GM12878 (cell line): ENCODE measurements at regions of chr19 and their contacts with region 1.

Region 1: DNA sequence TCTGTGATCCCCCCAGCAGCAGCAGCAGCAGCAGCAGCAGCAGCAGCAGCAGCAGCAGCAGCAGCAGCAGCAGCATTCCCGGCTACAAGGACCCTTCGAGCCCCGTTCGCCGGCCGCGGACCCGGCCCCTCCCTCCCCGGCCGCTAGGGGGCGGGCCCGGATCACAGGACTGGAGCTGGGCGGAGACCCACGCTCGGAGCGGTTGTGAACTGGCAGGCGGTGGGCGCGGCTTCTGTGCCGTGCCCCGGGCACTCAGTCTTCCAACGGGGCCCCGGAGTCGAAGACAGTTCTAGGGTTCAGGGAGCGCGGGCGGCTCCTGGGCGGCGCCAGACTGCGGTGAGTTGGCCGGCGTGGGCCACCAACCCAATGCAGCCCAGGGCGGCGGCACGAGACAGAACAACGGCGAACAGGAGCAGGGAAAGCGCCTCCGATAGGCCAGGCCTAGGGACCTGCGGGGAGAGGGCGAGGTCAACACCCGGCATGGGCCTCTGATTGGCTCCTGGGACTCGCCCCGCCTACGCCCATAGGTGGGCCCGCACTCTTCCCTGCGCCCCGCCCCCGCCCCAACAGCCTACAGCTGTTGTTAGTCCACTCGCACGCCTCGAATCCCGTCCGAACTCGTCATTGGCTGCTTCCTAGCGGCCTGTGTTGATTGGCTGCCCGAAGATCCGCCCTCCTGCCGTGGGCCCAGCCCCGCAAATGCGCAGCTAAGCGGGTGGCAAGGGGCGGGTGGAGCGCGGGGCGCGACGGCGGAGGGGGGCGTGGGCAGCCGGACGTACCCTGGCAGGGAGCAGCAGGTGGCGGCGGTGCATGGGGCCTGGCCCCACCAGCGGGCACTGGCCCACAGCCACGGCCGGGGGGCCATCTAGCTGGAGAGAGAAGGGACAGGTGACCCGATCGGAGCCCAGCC is 1.4 kb upstream of the SIX5 start:
- DNase-seq: peak; percentile 76
- ATAC-seq: peak; percentile 82
- H3K4me3 ChIP-seq: peak overlapping the region; percentile 78
- H3K27ac ChIP-seq: peak overlapping the region; percentile 67; the same call in 1 of the 2 replicates
- H3K4me1 ChIP-seq: peaks cover 4% of the 10 kb centered on the region
- H3K27me3 ChIP-seq: no peaks in the 10 kb centered on the region
- CTCF ChIP-seq: peak; percentile 86 to 95 (median 94)
- EP300 ChIP-seq: no peak
- POLR2A ChIP-seq: peak; percentile 65; the same call in 1 of the 2 replicates
- RAD21 ChIP-seq: peak; percentile 74

Region 2: GRCh38 chr19:45523642-45524256 is 246.7 kb before region 1 on chr19:
- CTCF ChIA-PET with region 1: no interaction called
- POLR2A ChIA-PET with region 1: no interaction called
- RAD21 ChIA-PET with region 1: no interaction called
- SMC1A ChIA-PET with region 1: no interaction called
- in situ Hi-C with region 1: no loop called
- intact Hi-C with region 1: no loop called
- DNase-seq: peak; percentile 57
- ATAC-seq: peak; percentile 96
- H3K4me3 ChIP-seq: no peak overlapping the region
- H3K27ac ChIP-seq: no peak overlapping the region
- H3K4me1 ChIP-seq: peaks cover 10% of the 10 kb centered on the region; the same call in 1 of the 2 replicates
- H3K27me3 ChIP-seq: no peaks in the 10 kb centered on the region
- CTCF ChIP-seq: peak; percentile 82 to 98 (median 90)
- EP300 ChIP-seq: no peak
- POLR2A ChIP-seq: no peak
- RAD21 ChIP-seq: peak; percentile 67

Region 3: DNA sequence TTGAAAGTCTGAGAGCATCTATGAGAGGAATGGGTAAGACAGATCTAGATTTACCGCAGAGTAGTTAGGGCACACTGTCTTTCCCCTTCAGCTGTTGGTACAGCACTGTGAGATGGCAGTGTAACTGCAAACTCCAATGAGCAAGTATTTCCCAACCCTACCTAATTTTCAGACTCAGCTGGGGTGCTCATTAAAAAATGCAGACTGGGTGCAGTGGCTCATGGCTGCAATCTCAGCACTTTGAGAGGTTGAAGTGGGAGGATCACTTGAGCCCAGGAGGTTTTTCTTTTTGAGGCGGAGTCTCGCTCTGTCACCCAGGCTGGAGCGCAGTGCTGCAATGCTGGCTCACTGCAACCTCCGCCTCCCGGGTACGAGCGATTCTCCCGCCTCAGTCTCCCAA is 65.3 kb before region 1 on chr19:
- CTCF ChIA-PET with region 1: interaction called, 8 read pairs
- POLR2A ChIA-PET with region 1: interaction called, 11 read pairs
- RAD21 ChIA-PET with region 1: interaction called, 16 read pairs
- SMC1A ChIA-PET with region 1: interaction called, 6 read pairs
- in situ Hi-C with region 1: no loop called
- intact Hi-C with region 1: no loop called
- DNase-seq: no peak
- ATAC-seq: no peak
- H3K4me3 ChIP-seq: no peak overlapping the region
- H3K27ac ChIP-seq: 0 out of 2 replicates have a peak overlapping the region, but pooled peaks have one; percentile 26
- H3K4me1 ChIP-seq: peaks cover 19% of the 10 kb centered on the region
- H3K27me3 ChIP-seq: no peaks in the 10 kb centered on the region
- CTCF ChIP-seq: no peak
- EP300 ChIP-seq: no peak
- POLR2A ChIP-seq: no peak
- RAD21 ChIP-seq: no peak

Region 4: GRCh38 chr19:45730389-45731288 is 39.8 kb before region 1 on chr19 and contains the start of gene FBXO46:
- CTCF ChIA-PET with region 1: interaction called, 8 read pairs
- POLR2A ChIA-PET with region 1: interaction called, 24 read pairs
- RAD21 ChIA-PET with region 1: interaction called, 27 read pairs
- SMC1A ChIA-PET with region 1: interaction called, 13 read pairs
- in situ Hi-C with region 1: no loop called
- intact Hi-C with region 1: loop called (anchors 5 kb)
- DNase-seq: peak; percentile 96
- ATAC-seq: peak; percentile 98
- H3K4me3 ChIP-seq: peak within 1 kb of the TSS; percentile 97
- H3K27ac ChIP-seq: peak within 1 kb of the TSS; percentile 90
- H3K4me1 ChIP-seq: peaks cover 4% of the 10 kb centered on the region; the same call in 1 of the 2 replicates
- H3K27me3 ChIP-seq: no peaks in the 10 kb centered on the region
- CTCF ChIP-seq: peak; percentile 28 to 40 (median 35); a peak in 5 of 6 replicates
- EP300 ChIP-seq: no peak
- POLR2A ChIP-seq: peak; percentile 87
- RAD21 ChIP-seq: peak; percentile 31; the same call in 1 of the 2 replicates
- polyA plus RNA-seq, gene FBXO46: 2.5 to 7.1 TPM

Region 5: GRCh38 chr19:45792470-45793177 is 22.2 kb after region 1 on chr19 and contains the start of gene DMWD:
- CTCF ChIA-PET with region 1: interaction called, 110 read pairs
- POLR2A ChIA-PET with region 1: interaction called, 20 read pairs
- RAD21 ChIA-PET with region 1: interaction called, 18 read pairs
- SMC1A ChIA-PET with region 1: interaction called, 7 read pairs
- in situ Hi-C with region 1: no loop called
- intact Hi-C with region 1: loop called (anchors 2 kb)
- DNase-seq: peak; percentile 81
- ATAC-seq: peak; percentile 95
- H3K4me3 ChIP-seq: peak within 1 kb of the TSS; percentile 98
- H3K27ac ChIP-seq: peak within 1 kb of the TSS; percentile 72
- H3K4me1 ChIP-seq: peaks cover 14% of the 10 kb centered on the region
- H3K27me3 ChIP-seq: no peaks in the 10 kb centered on the region
- CTCF ChIP-seq: no peak
- EP300 ChIP-seq: no peak
- POLR2A ChIP-seq: peak; percentile 80
- RAD21 ChIP-seq: no peak
- polyA plus RNA-seq, gene DMWD: 3.5 to 3.8 TPM

Region 6: DNA sequence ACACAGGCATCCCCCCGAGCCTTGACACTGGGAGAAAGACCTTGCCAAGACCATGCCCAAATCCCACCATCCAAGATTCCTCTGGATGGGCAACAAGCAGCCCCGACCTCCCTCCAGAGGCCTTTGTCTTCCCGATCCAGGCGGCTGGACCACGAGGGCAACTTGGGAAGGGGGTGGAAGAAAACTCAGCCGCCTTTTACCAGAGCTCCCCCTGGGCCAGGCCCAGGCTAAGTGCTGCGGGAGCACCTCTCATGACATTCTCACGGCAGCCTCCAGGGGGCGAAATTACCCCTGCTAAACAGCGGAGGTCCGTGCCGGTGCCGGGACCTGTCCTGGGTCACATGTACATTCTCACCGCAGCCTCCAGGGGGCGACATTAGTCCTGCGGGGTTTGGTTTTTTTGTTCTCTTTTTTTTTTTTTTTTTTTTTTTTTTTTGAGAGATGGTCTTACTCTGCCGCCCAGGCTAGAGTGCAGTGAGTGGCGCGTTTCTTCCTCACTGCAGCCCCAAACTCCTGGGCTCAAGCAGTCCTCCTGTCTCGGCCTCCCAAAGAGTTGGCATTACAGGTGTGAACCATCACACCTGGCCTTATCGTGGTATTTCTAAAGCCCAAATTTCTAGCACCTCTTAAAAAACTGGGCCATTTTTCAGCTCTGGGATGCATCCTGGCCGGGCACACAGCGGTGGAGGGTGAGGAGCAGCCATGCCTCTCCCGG is 46.7 kb after region 1 on chr19:
- CTCF ChIA-PET with region 1: interaction called, 13 read pairs
- POLR2A ChIA-PET with region 1: interaction called, 3 read pairs
- RAD21 ChIA-PET with region 1: interaction called, 7 read pairs
- SMC1A ChIA-PET with region 1: no interaction called
- in situ Hi-C with region 1: no loop called
- intact Hi-C with region 1: no loop called
- DNase-seq: peak; percentile 75
- ATAC-seq: peak; percentile 99
- H3K4me3 ChIP-seq: no peak overlapping the region
- H3K27ac ChIP-seq: no peak overlapping the region
- H3K4me1 ChIP-seq: no peaks in the 10 kb centered on the region
- H3K27me3 ChIP-seq: no peaks in the 10 kb centered on the region
- CTCF ChIP-seq: peak; percentile 96 to 100 (median 98)
- EP300 ChIP-seq: no peak
- POLR2A ChIP-seq: no peak
- RAD21 ChIP-seq: peak; percentile 70

Region 7: DNA sequence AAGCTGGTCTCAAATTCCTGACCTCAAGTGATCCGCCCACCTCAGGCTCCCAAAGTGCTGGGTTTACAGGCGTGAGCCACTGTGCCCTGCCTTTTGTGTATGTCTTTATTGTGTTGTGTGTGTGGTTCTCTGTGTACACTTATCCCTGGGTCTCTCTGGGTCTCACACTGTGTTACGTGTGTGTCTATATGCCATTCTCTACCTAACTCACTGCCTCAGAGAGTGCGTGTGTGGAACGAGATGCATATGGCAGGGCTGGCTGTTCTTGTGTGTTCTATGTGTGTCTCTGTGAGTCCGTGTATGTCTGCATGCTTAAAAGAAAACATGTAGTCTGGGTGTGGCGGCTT is 104.1 kb after region 1 on chr19:
- CTCF ChIA-PET with region 1: no interaction called
- POLR2A ChIA-PET with region 1: no interaction called
- RAD21 ChIA-PET with region 1: no interaction called
- SMC1A ChIA-PET with region 1: no interaction called
- in situ Hi-C with region 1: no loop called
- intact Hi-C with region 1: no loop called
- DNase-seq: no peak
- ATAC-seq: no peak
- H3K4me3 ChIP-seq: no peak overlapping the region
- H3K27ac ChIP-seq: no peak overlapping the region
- H3K4me1 ChIP-seq: peaks cover 8% of the 10 kb centered on the region
- H3K27me3 ChIP-seq: no peaks in the 10 kb centered on the region
- CTCF ChIP-seq: no peak
- EP300 ChIP-seq: no peak
- POLR2A ChIP-seq: no peak
- RAD21 ChIP-seq: no peak

Region 8: DNA sequence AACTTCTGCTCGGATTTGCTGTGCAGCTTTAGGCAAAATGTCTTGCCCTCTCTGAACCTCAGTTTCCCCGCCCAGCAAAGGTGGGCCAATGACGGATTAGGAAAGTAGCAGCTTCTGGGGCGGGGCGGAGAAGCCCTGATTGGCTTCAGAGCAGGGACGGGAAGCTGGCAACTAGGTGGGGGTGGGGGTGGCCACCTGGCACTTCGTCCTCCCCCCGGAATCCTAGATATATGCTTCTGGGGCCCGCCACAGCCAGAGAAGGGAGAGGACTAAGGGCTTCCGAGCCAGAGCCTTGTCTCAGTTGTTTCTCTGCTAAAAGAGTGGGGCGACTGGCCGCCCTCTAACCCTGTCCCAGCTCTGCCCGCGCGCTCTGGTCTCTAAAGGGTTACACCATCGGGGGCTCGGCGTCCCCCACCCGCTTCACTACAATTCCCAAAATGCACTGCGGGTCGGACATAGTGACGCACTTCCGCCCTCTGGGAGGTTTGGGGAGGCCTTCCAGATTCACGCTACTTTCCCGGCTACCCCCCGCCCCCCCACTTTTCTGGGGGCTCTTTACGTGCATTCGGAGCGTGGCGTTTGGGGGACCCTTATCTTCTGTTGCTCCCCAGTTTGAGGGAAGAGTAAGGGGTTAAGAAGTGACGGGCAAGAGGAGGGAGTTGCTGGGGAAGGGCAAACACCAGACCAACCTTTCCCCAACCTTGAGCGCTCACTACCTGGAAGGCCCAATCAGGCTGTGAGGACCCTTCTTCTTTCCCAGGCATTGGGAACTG is 116.2 kb after region 1 on chr19:
- CTCF ChIA-PET with region 1: interaction called, 7 read pairs
- POLR2A ChIA-PET with region 1: interaction called, 16 read pairs
- RAD21 ChIA-PET with region 1: interaction called, 9 read pairs
- SMC1A ChIA-PET with region 1: interaction called, 7 read pairs
- in situ Hi-C with region 1: no loop called
- intact Hi-C with region 1: no loop called
- DNase-seq: peak; percentile 73
- ATAC-seq: peak; percentile 75
- H3K4me3 ChIP-seq: peak overlapping the region; percentile 68
- H3K27ac ChIP-seq: peak overlapping the region; percentile 95
- H3K4me1 ChIP-seq: peaks cover 20% of the 10 kb centered on the region
- H3K27me3 ChIP-seq: no peaks in the 10 kb centered on the region
- CTCF ChIP-seq: no peak
- EP300 ChIP-seq: no peak; a peak in 1 of 4 replicates
- POLR2A ChIP-seq: peak; percentile 63
- RAD21 ChIP-seq: no peak